ENCODE measurements at regions of chr12 and their contacts with region 1.

Region 1: DNA sequence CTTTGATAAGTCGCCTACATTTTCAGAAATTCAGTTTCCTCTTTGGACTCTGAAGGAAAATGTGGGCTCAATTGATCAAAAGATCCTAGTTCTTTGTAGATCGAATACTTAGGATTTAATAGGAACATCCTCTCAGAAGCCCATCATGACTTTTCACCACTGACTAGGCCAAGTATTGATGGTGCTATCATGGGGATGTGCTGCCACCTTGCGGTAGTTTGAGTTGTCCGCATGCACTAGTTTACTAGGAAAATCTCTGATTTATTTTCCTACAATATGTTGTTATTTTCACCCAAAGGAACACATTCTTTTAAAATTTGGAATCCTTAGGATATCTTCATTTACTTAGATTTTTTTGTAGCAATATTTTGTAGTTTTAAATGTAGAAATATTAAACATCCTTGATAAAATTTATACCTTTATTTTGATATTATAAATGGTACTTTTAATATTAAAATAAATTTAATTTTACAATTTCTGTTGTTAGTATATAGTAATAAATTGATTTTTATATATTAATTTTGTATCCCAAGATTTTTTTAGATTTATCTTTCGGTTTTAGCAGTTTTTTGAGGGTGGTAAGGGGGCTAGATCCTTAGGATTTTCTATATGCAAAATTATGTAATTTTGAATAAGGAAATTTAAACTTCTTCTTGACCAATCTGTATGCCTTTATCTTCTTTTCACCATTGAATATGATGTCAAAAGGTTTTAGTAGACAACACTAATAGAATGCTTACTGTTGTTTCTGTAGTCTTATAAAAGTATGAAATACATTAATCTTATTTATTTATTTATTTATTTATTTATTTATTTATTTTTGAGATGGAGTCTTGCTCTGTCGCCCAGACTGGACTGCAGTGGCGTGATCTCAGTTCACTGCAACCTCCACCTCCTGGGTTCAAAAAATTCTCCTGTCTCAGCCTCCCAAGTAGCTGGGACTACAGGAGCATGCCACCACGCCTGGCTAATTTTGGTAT is 52.9 kb upstream of the OR9K2 start:
- DNase-seq: peak; percentile 56 to 87 (median 76)
- H3K4me3 ChIP-seq: no peak overlapping the region
- H3K27ac ChIP-seq: peak overlapping the region in 4 of 59 donors; percentile 1 to 38 (median 15)
- H3K27me3 ChIP-seq: peaks cover 0 to 10% (median 0%) of the 10 kb centered on the region in 45 donors
- CTCF ChIP-seq: peak; percentile 85 to 99 (median 95)

Region 2: GRCh38 chr12:54603173-54603814 is 470.0 kb before region 1 on chr12:
- intact Hi-C with region 1: loop called in 1 of 2 experiments (anchors 10 kb)
- DNase-seq: peak in 7 of 10 donors; percentile 51 to 75 (median 54)
- H3K4me3 ChIP-seq: no peak overlapping the region
- H3K27ac ChIP-seq: no peak overlapping the region
- H3K27me3 ChIP-seq: peaks cover 0 to 6% (median 0%) of the 10 kb centered on the region in 45 donors
- CTCF ChIP-seq: peak; percentile 53 to 86 (median 70)

Region 3: DNA sequence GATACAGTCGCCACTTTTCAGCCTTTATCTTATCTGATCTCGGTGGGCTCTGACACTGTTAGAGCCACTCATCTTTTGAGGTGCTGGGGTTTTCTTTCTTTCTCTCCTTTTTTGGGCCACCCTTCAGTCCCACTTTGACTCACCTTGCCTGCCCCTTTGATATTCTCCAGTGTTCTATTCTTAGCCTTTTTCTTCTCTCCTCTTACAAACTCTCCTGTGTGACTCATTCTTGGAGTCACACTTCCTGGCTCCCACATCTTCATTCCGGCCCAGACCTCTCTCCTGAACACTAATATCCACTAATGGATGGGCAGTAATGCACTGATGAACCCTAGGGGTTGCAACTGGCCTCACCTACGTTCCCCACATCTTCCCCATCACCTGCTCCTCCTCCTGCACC is 422.9 kb before region 1 on chr12:
- intact Hi-C with region 1: no loop called
- DNase-seq: no peak
- H3K4me3 ChIP-seq: no peak overlapping the region
- H3K27ac ChIP-seq: no peak overlapping the region
- H3K27me3 ChIP-seq: peaks cover 0 to 18% (median 0%) of the 10 kb centered on the region in 45 donors
- CTCF ChIP-seq: no peak

Region 4: DNA sequence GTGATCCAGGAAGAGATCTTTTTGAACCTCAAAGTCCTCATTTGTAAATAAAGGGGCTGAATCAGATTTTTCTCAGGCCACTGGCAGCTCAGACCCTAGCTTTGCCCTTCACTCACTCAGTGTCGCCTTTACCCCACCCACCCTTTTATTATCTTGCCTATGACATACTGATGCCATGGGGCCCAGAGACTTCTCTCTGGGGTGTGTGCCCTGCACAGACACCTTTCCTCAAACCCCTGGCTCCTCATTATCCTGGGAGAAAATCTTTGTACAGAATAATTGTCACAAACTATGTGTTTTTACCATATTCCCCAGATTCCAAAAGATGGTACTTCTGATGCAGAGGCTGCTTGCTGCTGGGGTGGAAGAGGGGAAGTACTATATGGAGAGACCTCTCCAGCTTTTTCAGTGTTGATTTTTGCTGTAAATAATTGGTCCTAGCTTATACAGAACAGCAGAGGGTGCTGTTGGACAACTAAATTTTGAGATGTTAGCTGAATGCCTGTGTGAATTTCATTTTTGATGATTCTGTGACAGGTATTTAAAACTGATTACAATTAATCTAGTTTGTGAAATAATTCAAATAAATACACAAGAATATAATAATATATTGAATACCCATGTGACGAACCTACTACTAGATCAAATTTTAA is 371.3 kb before region 1 on chr12:
- intact Hi-C with region 1: loop called in 1 of 2 experiments (anchors 5 kb)
- DNase-seq: no peak
- H3K4me3 ChIP-seq: no peak overlapping the region
- H3K27ac ChIP-seq: no peak overlapping the region
- H3K27me3 ChIP-seq: no peaks in the 10 kb centered on the region
- CTCF ChIP-seq: peak; percentile 26 to 89 (median 72)

Region 5: GRCh38 chr12:54853995-54854566 is 219.3 kb before region 1 on chr12 and contains the start of gene MUCL1:
- intact Hi-C with region 1: loop called in 1 of 2 experiments (anchors 10 kb)
- DNase-seq: peak in 2 of 10 donors; percentile 29 to 46
- H3K4me3 ChIP-seq: no peak within 1 kb of the TSS
- H3K27ac ChIP-seq: no peak within 1 kb of the TSS
- H3K27me3 ChIP-seq: no peaks in the 10 kb centered on the region
- CTCF ChIP-seq: peak in 55 of 56 donors; percentile 36 to 85 (median 71)
- total RNA-seq, gene MUCL1: 0.81 to 3.7 (median 1.7) TPM in 34 of 120 experiments, not detected in the others

Region 6: DNA sequence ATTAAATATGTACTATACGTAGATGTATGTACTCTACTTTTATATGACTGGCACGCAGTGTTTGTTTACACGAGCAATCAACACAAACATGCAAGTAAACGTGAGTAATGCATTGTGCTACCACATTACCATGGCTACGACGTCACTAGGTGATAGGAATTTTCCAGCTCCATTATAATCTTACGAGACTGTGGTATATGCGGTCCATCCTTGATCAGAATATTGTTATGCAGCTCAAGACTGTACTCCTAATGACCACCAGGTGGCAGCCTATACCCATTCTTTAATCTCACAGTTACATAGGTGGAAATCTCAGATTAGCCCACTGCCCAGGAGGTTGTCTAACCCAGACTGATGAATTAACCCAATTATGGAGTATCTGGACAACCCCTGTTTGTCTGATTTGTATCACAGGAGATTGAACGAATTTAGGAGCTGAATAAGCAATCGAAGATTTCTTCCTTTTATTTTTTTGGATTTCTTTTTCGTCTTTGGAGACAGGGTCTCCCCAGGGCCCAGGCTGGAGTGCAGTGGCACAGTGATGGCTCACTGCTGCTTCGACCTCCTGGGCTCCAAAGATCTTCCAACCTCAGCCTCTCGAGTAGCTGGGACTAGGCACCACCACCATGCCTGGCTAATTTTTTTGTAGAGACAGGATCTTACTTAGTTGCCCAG is 80.0 kb before region 1 on chr12:
- intact Hi-C with region 1: loop called (anchors 1 kb)
- DNase-seq: peak in 5 of 10 donors; percentile 32 to 75 (median 43)
- H3K4me3 ChIP-seq: no peak overlapping the region
- H3K27ac ChIP-seq: peak overlapping the region in 18 of 59 donors; percentile 1 to 69 (median 24)
- H3K27me3 ChIP-seq: no peaks in the 10 kb centered on the region
- CTCF ChIP-seq: peak; percentile 85 to 99 (median 96)

Region 7: GRCh38 chr12:55037351-55037987 is 35.9 kb before region 1 on chr12:
- intact Hi-C with region 1: no loop called
- DNase-seq: no peak
- H3K4me3 ChIP-seq: no peak overlapping the region
- H3K27ac ChIP-seq: no peak overlapping the region
- H3K27me3 ChIP-seq: peaks cover 0 to 19% (median 0%) of the 10 kb centered on the region in 45 donors
- CTCF ChIP-seq: no peak

Region 8: GRCh38 chr12:55220725-55221124 is 147.4 kb after region 1 on chr12 and contains the start of gene OR10A7:
- intact Hi-C with region 1: no loop called
- DNase-seq: no peak
- H3K4me3 ChIP-seq: no peak within 1 kb of the TSS
- H3K27ac ChIP-seq: no peak within 1 kb of the TSS
- H3K27me3 ChIP-seq: no peaks in the 10 kb centered on the region
- CTCF ChIP-seq: no peak
- total RNA-seq, gene OR10A7: not detected

Measured in dorsolateral prefrontal cortex (tissue), 120 donors.